H1 (cell line): ENCODE measurements at regions of chr11 and their contacts with region 1.

Region 1: DNA sequence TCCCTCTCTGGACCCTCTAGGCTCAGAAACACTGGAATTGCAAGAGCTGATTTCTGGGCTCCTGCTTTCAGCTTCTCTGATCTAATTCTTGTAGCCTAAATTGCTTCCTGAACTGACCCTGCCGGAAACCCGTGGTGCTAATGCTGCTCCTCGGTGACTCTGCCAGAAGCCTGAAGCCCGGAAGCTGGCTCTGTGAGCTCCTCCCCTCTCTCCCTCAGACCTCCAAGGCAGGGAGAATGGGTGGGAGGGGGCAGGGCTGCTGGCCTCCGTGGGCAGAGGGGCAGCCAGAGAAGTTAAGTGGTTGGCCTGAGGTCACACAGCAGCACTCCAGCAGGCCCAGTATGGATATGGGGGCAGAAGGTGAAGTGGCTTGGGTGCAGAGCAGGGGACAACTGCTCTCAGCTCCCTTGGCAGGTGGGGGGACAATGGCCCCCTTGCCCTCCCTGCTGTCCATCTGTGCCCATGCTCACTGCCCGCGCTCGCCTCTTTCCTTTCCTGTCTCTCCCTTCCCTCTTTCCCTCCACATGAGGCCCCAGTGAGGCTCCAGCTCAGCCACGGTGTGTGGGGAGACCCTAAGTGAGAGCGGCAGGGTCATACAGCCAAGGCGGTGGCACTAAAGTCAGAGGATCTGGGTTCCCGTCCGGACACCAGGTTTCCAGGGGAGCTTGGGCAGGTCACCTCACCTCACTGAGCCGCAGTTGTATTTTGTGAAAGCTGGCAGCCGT is 16.2 kb downstream of the CAPN5 start:
- DNase-seq: no peak
- H3K4me3 ChIP-seq: no peak overlapping the region
- H3K27ac ChIP-seq: no peak overlapping the region
- H3K4me1 ChIP-seq: peaks cover 0 to 2% (median 0%) of the 10 kb centered on the region in 4 experiments; a peak in 2 of 7 replicates
- H3K27me3 ChIP-seq: no peaks in the 10 kb centered on the region
- CTCF ChIP-seq: no peak
- EP300 ChIP-seq: no peak
- POLR2A ChIP-seq: no peak
- RAD21 ChIP-seq: no peak

Region 2: GRCh38 chr11:77101052-77101537 is 18.1 kb after region 1 on chr11:
- CTCF ChIA-PET with region 1: interaction called, 297 read pairs
- POLR2A ChIA-PET with region 1: interaction called, 3 read pairs
- DNase-seq: no peak
- H3K4me3 ChIP-seq: no peak overlapping the region
- H3K27ac ChIP-seq: no peak overlapping the region
- H3K4me1 ChIP-seq: no peaks in the 10 kb centered on the region
- H3K27me3 ChIP-seq: no peaks in the 10 kb centered on the region
- CTCF ChIP-seq: peak; percentile 60 to 79 (median 71)
- EP300 ChIP-seq: no peak
- POLR2A ChIP-seq: no peak
- RAD21 ChIP-seq: peak; percentile 48 to 60

Region 3: GRCh38 chr11:77309401-77310085 is 226.5 kb after region 1 on chr11:
- CTCF ChIA-PET with region 1: no interaction called
- POLR2A ChIA-PET with region 1: no interaction called
- DNase-seq: no peak
- H3K4me3 ChIP-seq: no peak overlapping the region
- H3K27ac ChIP-seq: no peak overlapping the region
- H3K4me1 ChIP-seq: peaks cover 0 to 3% (median 0%) of the 10 kb centered on the region in 4 experiments; a peak in 1 of 7 replicates
- H3K27me3 ChIP-seq: no peaks in the 10 kb centered on the region
- CTCF ChIP-seq: no peak
- EP300 ChIP-seq: no peak
- POLR2A ChIP-seq: no peak
- RAD21 ChIP-seq: no peak